ENCODE measurements at regions of chr3 and their contacts with region 1.

Region 1: DNA sequence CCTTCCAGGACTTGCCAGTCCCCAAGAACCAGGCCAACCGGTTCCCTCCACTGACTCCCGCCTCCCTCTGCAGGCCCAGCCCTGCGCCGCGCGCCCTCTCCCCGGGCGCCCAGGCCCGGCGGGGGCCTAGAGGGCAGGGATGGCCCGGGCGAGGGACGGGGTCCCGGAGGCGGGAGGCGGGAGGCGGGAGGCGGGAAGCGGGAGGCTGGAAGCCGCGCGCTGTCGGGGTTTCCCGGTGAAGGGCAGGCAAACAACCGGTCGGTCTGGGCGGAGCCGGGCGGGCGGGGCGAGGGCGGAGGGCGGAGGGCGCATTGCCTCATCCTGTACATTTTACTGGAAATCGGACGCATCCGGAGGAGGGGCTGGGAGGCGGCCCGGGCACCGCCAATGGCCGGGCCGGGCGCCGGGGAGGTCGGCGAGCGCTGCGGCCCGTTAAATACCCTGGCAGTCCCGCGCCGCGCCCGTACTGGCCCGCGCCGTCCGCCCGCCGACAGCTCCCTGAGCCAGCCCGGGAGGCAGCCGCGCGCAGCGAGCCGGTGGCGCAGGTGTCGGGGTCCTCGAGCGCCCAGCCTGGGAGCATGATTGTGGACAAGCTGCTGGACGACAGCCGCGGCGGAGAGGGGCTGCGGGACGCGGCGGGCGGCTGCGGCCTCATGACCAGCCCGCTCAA is at the start of gene NFKBIZ:
- DNase-seq: peak; percentile 99
- H3K4me3 ChIP-seq: peak within 1 kb of the TSS; percentile 89 to 96 (median 94)
- H3K27ac ChIP-seq: peak within 1 kb of the TSS; percentile 98 to 99 (median 98)
- H3K4me1 ChIP-seq: peaks cover 5 to 46% (median 42%) of the 10 kb centered on the region in 4 donors
- H3K27me3 ChIP-seq: no peaks in the 10 kb centered on the region
- CTCF ChIP-seq: no peak
- EP300 ChIP-seq: peak; percentile 49
- POLR2A ChIP-seq: peak; percentile 95
- total RNA-seq, gene NFKBIZ: 49.8 to 103 (median 95.4) TPM

Region 2: GRCh38 chr3:100852840-100853239 is 996.3 kb before region 1 on chr3:
- intact Hi-C with region 1: no loop called
- DNase-seq: no peak
- H3K4me3 ChIP-seq: no peak overlapping the region
- H3K27ac ChIP-seq: no peak overlapping the region
- H3K4me1 ChIP-seq: no peaks in the 10 kb centered on the region
- H3K27me3 ChIP-seq: no peaks in the 10 kb centered on the region
- CTCF ChIP-seq: no peak
- EP300 ChIP-seq: no peak
- POLR2A ChIP-seq: no peak

Region 3: GRCh38 chr3:101809178-101810021 is 39.8 kb before region 1 on chr3:
- intact Hi-C with region 1: loop called (anchors 5 kb)
- DNase-seq: no peak
- H3K4me3 ChIP-seq: no peak overlapping the region
- H3K27ac ChIP-seq: peak overlapping the region in 3 of 4 donors; percentile 24 to 53 (median 45)
- H3K4me1 ChIP-seq: peaks cover 15 to 38% (median 30%) of the 10 kb centered on the region in 4 donors
- H3K27me3 ChIP-seq: no peaks in the 10 kb centered on the region
- CTCF ChIP-seq: peak; percentile 62 to 68 (median 66)
- EP300 ChIP-seq: no peak
- POLR2A ChIP-seq: no peak

Region 4: GRCh38 chr3:101976473-101976872 is 127.3 kb after region 1 on chr3:
- intact Hi-C with region 1: no loop called
- DNase-seq: no peak
- H3K4me3 ChIP-seq: no peak overlapping the region
- H3K27ac ChIP-seq: peak overlapping the region; percentile 9 to 56 (median 36)
- H3K4me1 ChIP-seq: peaks cover 0 to 43% (median 35%) of the 10 kb centered on the region in 4 donors
- H3K27me3 ChIP-seq: no peaks in the 10 kb centered on the region
- CTCF ChIP-seq: no peak
- EP300 ChIP-seq: no peak
- POLR2A ChIP-seq: no peak

Region 5: GRCh38 chr3:102129760-102130608 is 280.8 kb after region 1 on chr3:
- intact Hi-C with region 1: loop called (anchors 10 kb)
- DNase-seq: no peak
- H3K4me3 ChIP-seq: no peak overlapping the region
- H3K27ac ChIP-seq: peak overlapping the region; percentile 86 to 90 (median 88)
- H3K4me1 ChIP-seq: peaks cover 12 to 55% (median 43%) of the 10 kb centered on the region in 4 donors
- H3K27me3 ChIP-seq: peaks cover 0 to 3% (median 0%) of the 10 kb centered on the region in 4 donors
- CTCF ChIP-seq: peak in 1 of 3 experiments; percentile 24
- EP300 ChIP-seq: peak; percentile 83
- POLR2A ChIP-seq: no peak

Region 6: DNA sequence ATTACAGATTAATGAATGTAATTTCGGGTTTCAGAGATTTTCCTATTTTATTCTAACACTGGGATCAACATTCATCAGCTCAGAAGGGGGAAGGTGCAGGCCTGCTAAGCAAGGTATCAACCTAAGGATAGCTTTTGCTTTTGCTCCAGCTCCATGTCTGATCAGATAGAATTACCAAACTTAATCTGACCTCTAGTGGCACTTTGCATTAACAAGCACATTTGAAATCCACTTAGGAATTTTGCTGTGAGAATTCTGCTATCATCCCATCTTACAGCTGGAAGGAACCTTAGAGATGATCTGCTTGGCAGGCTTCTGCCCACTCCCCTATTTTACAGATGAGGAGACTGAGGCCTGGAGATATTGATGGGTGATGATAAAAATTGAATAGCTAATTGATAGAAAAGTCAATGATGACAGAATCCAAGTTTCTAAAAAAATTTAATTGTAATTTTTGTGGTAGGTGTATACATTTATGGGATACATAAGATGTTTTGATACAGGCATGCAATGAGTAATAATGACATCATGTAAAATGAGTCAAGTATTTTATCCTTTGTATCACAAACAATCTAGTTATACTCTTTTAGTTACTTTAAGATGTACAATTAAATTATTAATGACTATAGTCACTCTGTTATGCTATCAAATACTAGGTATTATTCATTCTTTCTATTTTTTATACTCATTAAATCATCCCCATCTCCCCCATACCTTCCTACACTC is 376.4 kb after region 1 on chr3:
- intact Hi-C with region 1: loop called (anchors 2 kb)
- DNase-seq: no peak
- H3K4me3 ChIP-seq: no peak overlapping the region
- H3K27ac ChIP-seq: no peak overlapping the region
- H3K4me1 ChIP-seq: peaks cover 0 to 21% (median 15%) of the 10 kb centered on the region in 4 donors
- H3K27me3 ChIP-seq: no peaks in the 10 kb centered on the region
- CTCF ChIP-seq: peak; percentile 65 to 72 (median 68)
- EP300 ChIP-seq: no peak
- POLR2A ChIP-seq: no peak

Measured in esophagus muscularis mucosa (tissue), 4 donors.